Posterior cingulate gyrus (tissue), 11 donors: ENCODE measurements at regions of chr4 and their contacts with region 1.

Region 1: GRCh38 chr4:183996868-183997267 is 91.8 kb downstream of the STOX2 start:
- DNase-seq: no peak

Region 2: GRCh38 chr4:184100297-184100885 is 103.5 kb after region 1 on chr4:
- intact Hi-C with region 1: loop called (anchors 10 kb)
- DNase-seq: peak in 5 of 10 donors; percentile 39 to 90 (median 53)